Activated CD4-positive, alpha-beta T cell treated with anti-CD3 and anti-CD28 coated beads, Interleukin-2, amount 10 ng/mL, durations not matched to agents 7 days and 5 days (primary cell): ENCODE measurements at regions of chr4 and their contacts with region 1.

Region 1: DNA sequence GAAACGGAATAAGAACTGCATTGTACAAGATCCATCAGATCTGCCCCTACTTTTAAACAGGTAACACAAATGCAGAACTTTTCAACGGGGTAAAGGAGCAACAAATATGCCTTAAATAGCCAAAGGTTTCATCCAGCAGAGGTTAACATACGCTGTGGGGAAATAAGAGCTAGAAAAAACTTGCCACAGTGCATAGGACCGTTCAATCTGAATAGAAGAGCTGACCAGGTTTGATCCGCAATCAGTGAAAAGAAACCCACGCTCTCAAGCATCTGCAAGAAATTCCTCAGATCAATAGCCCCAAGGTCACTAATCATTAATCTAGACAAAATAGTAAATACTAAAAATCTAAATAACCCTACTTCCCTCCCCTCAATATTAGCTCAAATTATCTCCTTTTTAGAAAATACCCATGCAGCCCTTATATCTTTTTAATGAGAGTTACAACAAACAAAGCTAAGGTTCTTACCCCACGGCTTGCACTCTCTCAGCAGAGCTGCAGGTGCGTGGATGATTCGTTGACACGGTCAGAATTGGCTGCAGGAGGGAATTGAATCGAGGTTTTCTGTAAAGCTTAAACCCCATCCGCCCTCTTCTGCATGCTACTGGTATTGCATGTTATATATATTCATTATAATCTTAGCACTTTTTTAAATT is at the start of gene TLR10:
- DNase-seq: peak; percentile 52
- H3K4me3 Mint-ChIP-seq: no peak within 1 kb of the TSS
- H3K27ac Mint-ChIP-seq: no peak within 1 kb of the TSS
- H3K4me1 Mint-ChIP-seq: peaks cover 6% of the 10 kb centered on the region
- H3K27me3 Mint-ChIP-seq: peaks cover 5% of the 10 kb centered on the region
- total RNA-seq, gene TLR10: 0.23 TPM in 1 of 2 experiments, not detected in the other

Region 2: DNA sequence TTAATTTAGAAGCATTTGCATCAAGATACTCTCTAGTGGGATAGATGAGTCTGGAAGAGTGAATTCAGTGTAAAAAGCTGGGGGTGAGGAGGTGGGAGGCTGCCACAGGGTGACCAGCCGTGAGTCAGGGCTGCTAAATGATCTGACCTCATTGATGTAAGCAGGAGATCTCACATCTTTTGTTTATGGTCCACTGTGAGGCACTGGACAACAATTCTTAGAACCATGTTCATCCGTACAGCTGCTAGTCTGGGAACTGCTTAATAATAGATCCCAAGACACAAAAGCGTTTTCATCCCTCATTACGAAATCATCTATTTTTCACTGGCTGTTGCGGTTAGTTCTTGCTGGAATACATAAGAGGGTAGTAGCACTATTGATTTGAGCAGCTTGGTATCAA is 104.5 kb before region 1 on chr4:
- CTCF ChIA-PET with region 1: no interaction called
- POLR2A ChIA-PET with region 1: no interaction called
- DNase-seq: no peak
- H3K4me3 Mint-ChIP-seq: no peak overlapping the region
- H3K27ac Mint-ChIP-seq: no peak overlapping the region
- H3K4me1 Mint-ChIP-seq: peaks cover 65% of the 10 kb centered on the region
- H3K27me3 Mint-ChIP-seq: no peaks in the 10 kb centered on the region

Region 3: GRCh38 chr4:38759113-38759789 is 23.3 kb before region 1 on chr4:
- CTCF ChIA-PET with region 1: interaction called, 17 read pairs
- POLR2A ChIA-PET with region 1: no interaction called
- DNase-seq: peak; percentile 66
- H3K4me3 Mint-ChIP-seq: no peak overlapping the region
- H3K27ac Mint-ChIP-seq: no peak overlapping the region
- H3K4me1 Mint-ChIP-seq: peaks cover 29% of the 10 kb centered on the region
- H3K27me3 Mint-ChIP-seq: no peaks in the 10 kb centered on the region

Region 4: GRCh38 chr4:38820329-38821061 is 37.9 kb after region 1 on chr4:
- CTCF ChIA-PET with region 1: no interaction called
- POLR2A ChIA-PET with region 1: no interaction called
- DNase-seq: no peak
- H3K4me3 Mint-ChIP-seq: no peak overlapping the region
- H3K27ac Mint-ChIP-seq: peak overlapping the region; percentile 33
- H3K4me1 Mint-ChIP-seq: peaks cover 17% of the 10 kb centered on the region
- H3K27me3 Mint-ChIP-seq: peaks cover 2% of the 10 kb centered on the region